BJ (cell line): ENCODE measurements at regions of chr6 and their contacts with region 1.

Region 1: GRCh38 chr6:82270881-82271645 is 23.5 kb upstream of the IBTK start:
- DNase-seq: no peak
- H3K4me3 ChIP-seq: no peak overlapping the region
- H3K27me3 ChIP-seq: no peaks in the 10 kb centered on the region
- CTCF ChIP-seq: peak; percentile 52

Region 2: DNA sequence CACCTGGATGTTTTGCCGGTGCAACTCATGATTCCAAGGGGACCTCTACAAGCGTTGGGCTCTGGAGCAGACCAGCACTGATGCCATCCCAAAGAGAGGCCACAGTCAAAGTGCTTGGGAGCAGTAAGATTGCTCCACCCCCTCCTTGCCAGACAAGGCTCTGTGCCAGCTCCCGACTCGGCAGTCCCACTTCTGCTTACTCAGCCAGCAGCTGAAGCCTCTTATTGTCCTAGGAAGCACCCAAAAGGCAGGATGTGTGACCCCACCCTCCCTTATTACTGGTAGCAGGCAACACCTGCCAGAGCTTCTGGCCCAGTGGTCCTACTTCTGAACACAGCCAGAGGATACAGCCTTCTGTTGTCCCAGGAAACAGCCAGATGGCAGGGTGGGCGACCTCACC is 1132.8 kb before region 1 on chr6:
- CTCF ChIA-PET with region 1: no interaction called
- POLR2A ChIA-PET with region 1: no interaction called
- DNase-seq: no peak
- H3K4me3 ChIP-seq: no peak overlapping the region
- H3K27me3 ChIP-seq: no peaks in the 10 kb centered on the region
- CTCF ChIP-seq: no peak

Region 3: DNA sequence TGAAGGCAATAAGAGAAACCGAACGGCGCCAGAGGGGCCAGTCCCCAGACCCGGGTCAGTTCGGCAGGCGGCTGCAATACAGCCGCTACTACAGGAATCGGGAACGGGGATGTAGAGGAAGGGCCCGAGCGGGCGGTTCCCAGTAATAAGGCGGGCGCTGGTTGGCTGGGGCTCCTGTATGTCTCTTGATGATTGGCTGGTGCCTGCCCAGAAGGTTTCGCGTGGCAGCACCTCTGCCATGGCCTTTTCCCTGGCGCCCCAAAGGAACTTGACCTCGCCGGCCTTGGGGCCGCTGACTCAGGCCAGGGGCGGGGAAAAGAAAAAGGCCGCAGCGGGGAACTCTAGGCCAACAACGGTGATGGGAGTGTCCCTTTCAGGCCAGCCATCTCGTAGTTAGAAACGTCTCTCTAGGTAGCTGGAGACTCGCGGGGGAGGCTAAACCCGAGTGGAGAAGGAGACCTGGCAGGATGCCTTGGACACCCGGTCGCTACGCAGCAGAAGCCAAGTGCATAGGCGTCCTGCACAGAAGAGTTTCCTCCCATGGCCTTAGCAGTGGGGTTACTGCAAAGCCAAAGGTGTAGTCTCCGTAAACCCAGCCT is 23.3 kb before region 1 on chr6 and contains the start of gene IBTK:
- CTCF ChIA-PET with region 1: interaction called, 11 read pairs
- POLR2A ChIA-PET with region 1: no interaction called
- DNase-seq: peak; percentile 58
- H3K4me3 ChIP-seq: peak within 1 kb of the TSS; percentile 61
- H3K27me3 ChIP-seq: no peaks in the 10 kb centered on the region
- CTCF ChIP-seq: no peak
- polyA plus RNA-seq, gene IBTK: 13.0 and 29.8 TPM in 2 replicates

Region 4: DNA sequence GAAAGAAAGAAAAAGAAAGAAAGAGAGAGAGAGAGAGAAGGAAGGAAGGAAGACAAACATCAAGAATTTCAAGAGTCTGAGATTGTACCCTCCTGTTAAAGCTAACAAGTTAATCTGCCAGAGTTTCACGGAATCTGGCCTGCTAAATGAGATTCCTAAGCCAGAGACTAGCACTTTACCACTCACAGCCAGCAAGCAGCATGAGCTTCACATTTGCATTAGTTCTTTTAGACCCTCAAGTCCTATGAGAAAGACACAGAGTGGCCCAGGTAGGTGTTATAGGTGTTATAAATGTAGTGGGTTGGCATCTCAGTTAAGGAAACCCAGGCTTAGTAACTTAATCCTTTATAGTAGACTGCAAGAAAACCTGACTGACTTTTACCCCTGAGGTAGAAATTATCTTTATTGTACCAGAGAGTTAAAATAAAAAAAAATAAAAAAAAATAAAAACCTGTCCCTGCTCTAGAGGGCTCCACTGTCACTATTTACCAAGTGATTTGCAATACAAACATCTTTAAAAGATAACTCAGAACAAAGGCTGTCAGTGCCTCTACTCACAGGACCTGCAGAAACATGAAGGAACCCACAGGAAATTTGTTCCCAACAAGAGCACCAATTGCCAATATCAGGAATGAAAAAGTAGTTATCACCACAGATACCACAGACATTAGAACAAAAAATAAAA is 13.8 kb before region 1 on chr6:
- CTCF ChIA-PET with region 1: interaction called, 33 read pairs
- POLR2A ChIA-PET with region 1: no interaction called
- DNase-seq: no peak
- H3K4me3 ChIP-seq: no peak overlapping the region
- H3K27me3 ChIP-seq: no peaks in the 10 kb centered on the region
- CTCF ChIP-seq: no peak